ENCODE measurements at regions of chr5 and their contacts with region 1.

Region 1: DNA sequence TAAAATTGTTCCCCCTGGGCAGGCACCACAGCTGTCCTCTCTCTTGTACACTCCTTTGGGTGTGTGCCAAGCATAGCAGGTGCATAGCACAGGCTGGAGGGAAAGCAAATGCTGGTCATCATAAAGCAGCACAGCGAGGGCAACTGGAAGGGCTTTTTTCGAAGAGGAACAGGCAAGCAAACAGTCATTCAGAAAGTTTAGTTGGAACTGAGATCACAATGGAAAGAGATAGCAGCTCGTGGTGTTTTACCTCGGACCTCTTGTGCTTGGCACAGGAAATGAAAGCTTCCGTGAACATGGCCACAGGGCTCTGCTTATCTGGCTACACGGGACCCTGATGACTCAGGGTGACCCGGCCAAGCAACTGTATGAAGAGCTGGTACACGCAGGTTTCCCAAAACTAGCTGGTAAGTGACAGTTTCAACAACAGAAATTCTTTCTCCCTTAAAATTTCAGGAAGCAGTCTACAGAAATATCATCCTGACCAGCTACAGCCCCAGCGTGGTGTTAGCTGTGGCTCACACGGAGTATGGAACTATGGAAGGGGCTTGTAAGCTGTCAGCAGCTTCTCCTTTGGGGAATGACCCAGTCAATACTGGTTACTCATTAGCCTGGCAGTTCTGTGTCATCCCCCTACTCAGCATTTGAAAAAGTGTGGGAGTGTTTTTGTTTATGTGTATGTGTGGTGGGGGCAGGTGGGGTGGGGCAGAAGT is 48.1 kb downstream of the POC5 start:
- DNase-seq: no peak
- H3K4me3 ChIP-seq: no peak overlapping the region
- CTCF ChIP-seq: no peak

Region 2: GRCh38 chr5:75616971-75617621 is 52.0 kb before region 1 on chr5:
- in situ Hi-C with region 1: loop called (anchors 5 kb)
- DNase-seq: no peak
- H3K4me3 ChIP-seq: no peak overlapping the region
- CTCF ChIP-seq: no peak

Measured in astrocyte of the cerebellum (primary cell).